Calu3 (cell line): ENCODE measurements at regions of chr5 and their contacts with region 1.

Region 1: GRCh38 chr5:119302916-119303897 is 52.6 kb upstream of the TNFAIP8 start:
- DNase-seq: peak; percentile 79
- H3K4me3 Mint-ChIP-seq: peak overlapping the region; percentile 69
- H3K27ac Mint-ChIP-seq: peak overlapping the region; percentile 97
- H3K4me1 Mint-ChIP-seq: peaks cover 72% of the 10 kb centered on the region
- H3K27me3 Mint-ChIP-seq: no peaks in the 10 kb centered on the region
- CTCF ChIP-seq: peak; percentile 4

Region 2: GRCh38 chr5:119022017-119022745 is 281.0 kb before region 1 on chr5:
- CTCF ChIA-PET with region 1: interaction called, 4 read pairs
- intact Hi-C with region 1: loop called (anchors 10 kb)
- DNase-seq: no peak
- H3K4me3 Mint-ChIP-seq: no peak overlapping the region
- H3K27ac Mint-ChIP-seq: no peak overlapping the region
- H3K4me1 Mint-ChIP-seq: peaks cover 9% of the 10 kb centered on the region
- H3K27me3 Mint-ChIP-seq: no peaks in the 10 kb centered on the region
- CTCF ChIP-seq: peak; percentile 34

Region 3: GRCh38 chr5:119070828-119071572 is 232.2 kb before region 1 on chr5 and contains the start of gene DMXL1:
- CTCF ChIA-PET with region 1: interaction called, 5 read pairs
- intact Hi-C with region 1: loop called (anchors 5 kb)
- DNase-seq: peak; percentile 99
- H3K4me3 Mint-ChIP-seq: peak within 1 kb of the TSS; percentile 100
- H3K27ac Mint-ChIP-seq: peak within 1 kb of the TSS; percentile 95
- H3K4me1 Mint-ChIP-seq: peaks cover 25% of the 10 kb centered on the region
- H3K27me3 Mint-ChIP-seq: no peaks in the 10 kb centered on the region
- CTCF ChIP-seq: no peak
- total RNA-seq, gene DMXL1: 43.3 and 46.6 TPM in 2 replicates

Region 4: DNA sequence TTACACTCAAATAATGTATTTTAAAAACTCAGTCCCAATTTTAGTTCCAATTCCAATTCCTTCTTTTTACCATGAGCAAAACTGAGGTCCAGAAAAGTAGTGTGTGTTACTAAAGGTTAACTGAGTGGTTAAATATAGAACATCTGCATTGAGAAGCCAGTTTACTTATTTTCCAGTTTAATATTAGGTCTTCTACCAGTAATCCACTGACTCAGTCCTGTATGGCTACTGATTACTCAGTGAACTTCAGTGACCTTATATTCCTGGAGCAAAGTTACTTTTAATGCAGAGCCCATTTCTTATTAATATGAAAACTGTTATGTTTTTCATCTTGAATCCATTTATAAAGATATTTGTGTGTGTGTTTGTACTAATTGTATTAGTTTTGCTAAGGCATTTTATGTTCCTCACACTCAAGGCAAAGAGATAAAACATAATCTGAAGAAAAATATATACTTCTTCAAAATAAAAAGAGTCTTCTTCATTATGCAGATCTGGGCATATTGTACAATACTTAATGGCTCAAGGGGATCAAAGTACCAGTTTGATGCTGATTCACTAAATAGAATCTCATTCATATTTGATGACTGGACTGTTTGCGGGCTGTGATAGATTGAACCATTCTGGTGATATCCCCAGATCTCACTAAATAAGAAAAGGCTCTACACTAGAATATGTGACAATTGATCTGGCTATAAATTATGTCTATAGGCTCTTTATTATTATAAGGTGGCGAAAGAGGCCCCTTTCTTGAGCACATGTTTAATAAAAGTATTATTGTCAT is 171.5 kb before region 1 on chr5:
- CTCF ChIA-PET with region 1: interaction called, 3 read pairs
- intact Hi-C with region 1: loop called (anchors 5 kb)
- DNase-seq: no peak
- H3K4me3 Mint-ChIP-seq: no peak overlapping the region
- H3K27ac Mint-ChIP-seq: peak overlapping the region; percentile 79
- H3K4me1 Mint-ChIP-seq: peaks cover 32% of the 10 kb centered on the region
- H3K27me3 Mint-ChIP-seq: no peaks in the 10 kb centered on the region
- CTCF ChIP-seq: no peak

Region 5: DNA sequence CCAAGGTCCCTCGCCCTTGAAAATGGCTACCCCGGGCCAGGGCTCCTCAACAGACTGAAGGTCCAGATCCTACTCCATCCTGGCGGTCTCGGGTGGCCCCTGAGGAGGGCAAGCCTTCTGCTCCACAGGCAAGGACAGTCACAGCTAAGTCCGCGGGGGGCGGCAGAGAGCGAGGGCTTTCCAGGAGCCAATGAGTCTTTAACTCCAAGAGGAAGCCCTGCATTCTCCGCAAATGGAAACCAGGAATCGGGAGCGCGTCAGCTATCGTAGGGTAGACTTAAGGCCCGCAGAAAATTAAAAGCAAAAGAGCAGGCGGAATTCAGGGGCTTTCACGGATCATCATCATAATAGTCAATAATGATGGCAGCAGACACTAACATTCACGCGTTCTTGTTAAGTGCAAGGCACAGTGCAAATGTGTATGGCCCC is 35.2 kb before region 1 on chr5:
- CTCF ChIA-PET with region 1: interaction called, 21 read pairs
- intact Hi-C with region 1: loop called (anchors 1 kb)
- DNase-seq: peak; percentile 93
- H3K4me3 Mint-ChIP-seq: peak overlapping the region; percentile 83
- H3K27ac Mint-ChIP-seq: peak overlapping the region; percentile 65
- H3K4me1 Mint-ChIP-seq: peaks cover 39% of the 10 kb centered on the region
- H3K27me3 Mint-ChIP-seq: no peaks in the 10 kb centered on the region
- CTCF ChIP-seq: peak; percentile 56

Region 6: GRCh38 chr5:119274767-119275130 is 28.5 kb before region 1 on chr5:
- CTCF ChIA-PET with region 1: interaction called, 6 read pairs
- intact Hi-C with region 1: loop called (anchors 1 kb)
- DNase-seq: no peak
- H3K4me3 Mint-ChIP-seq: no peak overlapping the region
- H3K27ac Mint-ChIP-seq: peak overlapping the region; percentile 60
- H3K4me1 Mint-ChIP-seq: peaks cover 63% of the 10 kb centered on the region
- H3K27me3 Mint-ChIP-seq: no peaks in the 10 kb centered on the region
- CTCF ChIP-seq: no peak

Region 7: GRCh38 chr5:119290161-119290569 is 13.0 kb before region 1 on chr5:
- CTCF ChIA-PET with region 1: interaction called, 13 read pairs
- intact Hi-C with region 1: loop called (anchors 2 kb)
- DNase-seq: no peak
- H3K4me3 Mint-ChIP-seq: no peak overlapping the region
- H3K27ac Mint-ChIP-seq: no peak overlapping the region
- H3K4me1 Mint-ChIP-seq: peaks cover 70% of the 10 kb centered on the region
- H3K27me3 Mint-ChIP-seq: no peaks in the 10 kb centered on the region
- CTCF ChIP-seq: no peak

Region 8: GRCh38 chr5:119515192-119515591 is 212.0 kb after region 1 on chr5:
- CTCF ChIA-PET with region 1: no interaction called
- intact Hi-C with region 1: no loop called
- DNase-seq: no peak
- H3K4me3 Mint-ChIP-seq: no peak overlapping the region
- H3K27ac Mint-ChIP-seq: no peak overlapping the region
- H3K4me1 Mint-ChIP-seq: no peaks in the 10 kb centered on the region
- H3K27me3 Mint-ChIP-seq: no peaks in the 10 kb centered on the region
- CTCF ChIP-seq: no peak

Region 9: DNA sequence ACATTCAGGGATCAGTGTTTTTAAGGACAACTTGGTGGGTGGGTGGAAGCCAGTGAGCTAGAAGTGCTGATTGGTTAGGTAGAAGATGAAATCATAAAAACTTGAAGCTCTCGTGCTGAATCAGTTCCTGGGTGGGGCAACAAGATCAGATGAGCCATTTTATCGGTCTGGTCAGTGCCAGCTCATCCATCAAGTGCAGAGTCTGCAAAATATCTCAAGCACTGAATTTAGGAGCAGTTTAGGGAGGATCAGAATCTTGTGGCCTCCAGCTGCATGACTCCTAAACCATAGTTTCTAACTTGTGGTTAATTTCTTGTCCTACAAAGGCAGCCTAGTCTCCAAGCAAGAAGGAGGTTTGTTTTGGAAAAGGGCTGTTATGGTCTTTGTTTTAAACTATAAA is 492.6 kb after region 1 on chr5:
- CTCF ChIA-PET with region 1: no interaction called
- intact Hi-C with region 1: no loop called
- DNase-seq: no peak
- H3K4me3 Mint-ChIP-seq: no peak overlapping the region
- H3K27ac Mint-ChIP-seq: no peak overlapping the region
- H3K4me1 Mint-ChIP-seq: no peaks in the 10 kb centered on the region
- H3K27me3 Mint-ChIP-seq: no peaks in the 10 kb centered on the region
- CTCF ChIP-seq: no peak